CD4-positive, alpha-beta T cell (primary cell): ENCODE measurements at regions of chr1 and their contacts with region 1.

Region 1: DNA sequence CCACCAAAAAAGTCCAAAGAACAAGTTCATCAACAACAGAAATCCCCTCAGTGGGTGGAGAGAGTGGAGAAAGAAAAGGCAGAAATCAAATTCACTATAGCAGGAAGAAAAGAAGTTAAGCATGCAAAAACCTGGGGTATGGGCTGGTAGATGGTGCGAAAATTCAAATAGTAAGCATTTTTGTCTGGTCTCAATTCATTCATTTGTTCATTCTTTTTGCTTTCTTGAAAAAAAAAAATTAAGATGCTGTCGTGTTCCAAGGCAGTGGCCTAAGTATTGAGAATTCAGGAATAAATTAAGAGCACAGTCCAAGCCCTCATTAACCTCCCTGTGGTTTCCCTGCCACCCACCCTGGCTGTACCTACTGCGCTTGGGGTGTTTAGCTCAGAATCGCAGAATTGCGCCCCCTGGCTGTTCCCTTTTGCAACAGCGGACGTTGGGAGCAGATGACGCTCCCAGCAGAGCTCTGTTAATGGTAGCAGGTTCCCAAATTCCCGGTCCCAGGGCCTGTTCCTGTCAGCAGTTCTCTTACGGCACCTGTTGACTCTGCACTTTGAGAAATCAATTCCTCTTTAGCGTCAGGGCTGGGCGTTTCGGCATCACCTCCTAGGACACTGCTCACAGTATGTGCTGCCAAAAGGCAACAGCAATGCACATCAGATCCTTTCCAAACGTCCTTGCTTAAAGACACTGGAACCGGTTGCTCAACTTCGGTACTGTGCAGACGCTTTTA is 34.0 kb upstream of the SSX2IP start:
- DNase-seq: peak; percentile 26 to 71 (median 42)
- ATAC-seq: peak; percentile 67
- H3K4me3 ChIP-seq: no peak overlapping the region
- H3K4me3 Mint-ChIP-seq: no peak overlapping the region
- H3K27ac ChIP-seq: no peak overlapping the region
- H3K27ac Mint-ChIP-seq: no peak overlapping the region
- H3K4me1 ChIP-seq: no peaks in the 10 kb centered on the region
- H3K4me1 Mint-ChIP-seq: no peaks in the 10 kb centered on the region
- H3K27me3 ChIP-seq: no peaks in the 10 kb centered on the region
- H3K27me3 Mint-ChIP-seq: peaks cover 3% of the 10 kb centered on the region
- CTCF ChIP-seq: peak; percentile 49

Region 2: DNA sequence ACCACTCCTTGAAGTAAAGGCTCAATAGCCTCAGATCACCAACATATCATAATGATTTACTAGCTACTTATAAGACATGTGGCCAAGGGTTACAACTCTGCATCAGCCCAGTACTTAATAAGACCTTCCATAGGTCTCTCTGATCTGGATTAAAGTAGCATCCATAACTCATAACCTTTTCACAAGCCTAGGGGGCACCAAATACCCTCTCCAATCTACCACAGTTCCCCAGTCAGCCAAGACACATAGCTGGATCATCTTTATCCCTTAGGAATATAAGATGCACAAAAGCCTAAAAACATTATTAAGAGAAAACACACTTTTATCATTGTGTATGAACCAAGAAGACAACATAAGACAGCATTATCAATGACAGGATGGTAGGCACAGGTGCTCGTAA is 56.1 kb before region 1 on chr1:
- CTCF ChIA-PET with region 1: interaction called, 14 read pairs
- POLR2A ChIA-PET with region 1: no interaction called
- intact Hi-C with region 1: loop called (anchors 5 to 10 kb)
- DNase-seq: peak in 4 of 14 experiments; percentile 20 to 41 (median 34)
- ATAC-seq: peak; percentile 37
- H3K4me3 ChIP-seq: no peak overlapping the region
- H3K4me3 Mint-ChIP-seq: no peak overlapping the region
- H3K27ac ChIP-seq: no peak overlapping the region
- H3K27ac Mint-ChIP-seq: no peak overlapping the region
- H3K4me1 ChIP-seq: no peaks in the 10 kb centered on the region
- H3K4me1 Mint-ChIP-seq: peaks cover 3% of the 10 kb centered on the region
- H3K27me3 ChIP-seq: no peaks in the 10 kb centered on the region
- H3K27me3 Mint-ChIP-seq: no peaks in the 10 kb centered on the region
- CTCF ChIP-seq: peak; percentile 22